ENCODE measurements at regions of chr4 and their contacts with region 1.

Region 1: DNA sequence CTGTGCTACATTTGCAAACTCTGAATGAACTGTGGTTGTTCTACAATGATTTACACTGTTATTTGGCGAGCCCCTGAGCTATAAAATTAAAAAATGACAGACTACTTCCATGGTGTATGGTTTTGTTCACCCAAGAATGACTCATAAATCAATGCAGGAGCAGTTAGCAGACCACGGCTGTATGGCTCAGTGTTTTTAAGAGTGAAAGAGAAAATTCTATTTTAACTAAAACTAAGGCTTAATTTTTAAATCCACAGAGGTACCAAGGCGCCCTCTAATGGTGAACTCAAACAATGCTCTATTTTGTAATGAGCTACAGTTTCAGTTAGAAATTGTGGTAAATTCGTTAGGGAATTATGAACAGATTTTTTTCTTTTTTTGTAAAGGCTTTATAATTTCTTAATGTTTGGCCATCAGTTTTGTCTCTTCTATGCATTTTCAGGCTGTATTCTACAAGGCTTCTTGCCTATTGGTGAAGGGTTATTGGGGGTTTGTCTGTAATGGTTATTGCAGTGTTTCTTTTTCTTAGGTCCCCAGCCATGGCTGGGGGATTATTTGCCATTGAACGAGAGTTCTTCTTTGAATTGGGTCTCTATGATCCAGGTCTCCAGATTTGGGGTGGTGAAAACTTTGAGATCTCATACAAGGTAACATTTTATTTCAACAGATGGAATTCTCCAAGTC is 32.5 kb downstream of the HMGB2 start:
- DNase-seq: peak; percentile 39
- H3K4me3 Mint-ChIP-seq: no peak overlapping the region
- H3K27ac Mint-ChIP-seq: no peak overlapping the region
- H3K4me1 Mint-ChIP-seq: peaks cover 2% of the 10 kb centered on the region
- H3K27me3 Mint-ChIP-seq: no peaks in the 10 kb centered on the region

Region 2: GRCh38 chr4:173025131-173025530 is 276.5 kb before region 1 on chr4:
- CTCF ChIA-PET with region 1: interaction called, 22 read pairs
- intact Hi-C with region 1: loop called (anchors 1 kb)
- DNase-seq: peak; percentile 43
- H3K4me3 Mint-ChIP-seq: no peak overlapping the region
- H3K27ac Mint-ChIP-seq: no peak overlapping the region
- H3K4me1 Mint-ChIP-seq: peaks cover 4% of the 10 kb centered on the region
- H3K27me3 Mint-ChIP-seq: no peaks in the 10 kb centered on the region

Region 3: GRCh38 chr4:173091362-173091761 is 210.3 kb before region 1 on chr4:
- CTCF ChIA-PET with region 1: no interaction called
- intact Hi-C with region 1: no loop called
- DNase-seq: no peak
- H3K4me3 Mint-ChIP-seq: no peak overlapping the region
- H3K27ac Mint-ChIP-seq: no peak overlapping the region
- H3K4me1 Mint-ChIP-seq: no peaks in the 10 kb centered on the region
- H3K27me3 Mint-ChIP-seq: peaks cover 8% of the 10 kb centered on the region

Region 4: DNA sequence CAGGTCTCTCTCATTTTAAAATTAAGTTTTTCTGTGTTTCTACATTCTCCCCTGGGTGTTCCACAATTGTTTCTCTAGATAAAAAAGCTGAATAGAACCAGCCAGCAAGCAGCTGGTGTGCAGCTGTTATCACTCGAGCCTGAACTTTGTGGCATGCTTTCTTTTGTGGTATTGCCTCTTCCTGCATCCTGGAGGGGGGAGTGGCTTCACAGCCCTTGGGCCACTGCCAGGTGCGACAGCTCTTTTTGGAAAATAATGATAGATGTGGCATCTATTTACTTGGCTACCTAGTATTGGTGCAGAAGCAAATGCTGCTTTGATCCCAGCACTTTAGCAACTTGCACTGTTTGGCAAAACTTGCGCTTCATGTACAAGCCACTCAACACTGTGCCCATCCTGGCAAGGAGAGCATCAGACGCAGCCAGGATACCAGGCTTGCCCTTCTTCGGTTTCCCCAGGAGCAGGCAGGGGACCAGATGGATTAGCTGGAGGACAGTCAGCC is 36.9 kb before region 1 on chr4:
- CTCF ChIA-PET with region 1: interaction called, 10 read pairs
- intact Hi-C with region 1: no loop called
- DNase-seq: peak; percentile 57
- H3K4me3 Mint-ChIP-seq: peak overlapping the region; percentile 15
- H3K27ac Mint-ChIP-seq: no peak overlapping the region
- H3K4me1 Mint-ChIP-seq: peaks cover 18% of the 10 kb centered on the region
- H3K27me3 Mint-ChIP-seq: no peaks in the 10 kb centered on the region

Region 5: DNA sequence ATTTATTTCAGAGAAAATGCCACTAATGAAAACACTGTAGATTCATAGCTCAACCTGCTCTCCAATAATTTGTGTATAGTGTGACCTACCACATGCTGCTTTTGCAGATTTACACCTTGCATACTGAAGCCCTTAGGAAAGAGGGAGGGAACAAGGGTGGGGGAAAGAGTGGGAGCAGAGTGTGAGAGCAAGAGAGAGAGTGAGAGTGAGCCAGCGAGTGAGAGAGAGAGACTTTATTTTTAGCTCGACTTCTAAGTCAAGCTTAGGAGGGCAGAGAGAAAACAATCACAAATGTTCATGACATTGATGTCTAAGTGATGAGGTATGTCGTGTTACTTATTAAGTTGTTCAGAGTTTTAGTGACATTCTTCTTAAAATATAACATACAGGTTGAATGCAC is 340.8 kb after region 1 on chr4:
- CTCF ChIA-PET with region 1: no interaction called
- intact Hi-C with region 1: no loop called
- DNase-seq: no peak
- H3K4me3 Mint-ChIP-seq: no peak overlapping the region
- H3K27ac Mint-ChIP-seq: no peak overlapping the region
- H3K4me1 Mint-ChIP-seq: no peaks in the 10 kb centered on the region
- H3K27me3 Mint-ChIP-seq: peaks cover 4% of the 10 kb centered on the region

Measured in activated naive CD4-positive, alpha-beta T cell treated with anti-CD3 and anti-CD28 coated beads for 36 hours (primary cell).